GM10248 (cell line): ENCODE measurements at regions of chr13 and their contacts with region 1.

Region 1: DNA sequence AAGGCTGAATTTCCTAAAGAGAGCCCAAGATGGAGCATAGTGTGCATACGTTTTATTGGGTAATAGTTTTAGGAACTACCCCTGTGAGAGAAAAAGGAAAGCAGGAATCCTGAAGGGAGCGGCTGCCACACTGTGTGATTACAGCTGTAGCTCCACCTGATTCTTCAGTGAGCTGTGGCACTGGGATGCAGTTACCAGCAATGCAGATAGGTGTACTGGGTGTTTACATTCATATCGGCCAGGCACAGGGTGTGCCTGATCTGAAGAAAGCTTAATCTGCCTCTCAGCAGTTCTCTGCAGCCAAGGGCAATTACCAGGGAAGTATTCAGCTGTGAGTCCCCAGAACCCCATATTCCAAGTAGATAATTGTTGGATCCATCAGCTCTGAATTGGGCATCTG is 1541.8 kb downstream of the EFNB2 start:
- DNase-seq: no peak
- CTCF ChIP-seq: no peak

Region 2: GRCh38 chr13:104869501-104869900 is 124.2 kb before region 1 on chr13:
- CTCF ChIA-PET with region 1: no interaction called
- POLR2A ChIA-PET with region 1: no interaction called
- DNase-seq: no peak
- CTCF ChIP-seq: no peak

Region 3: DNA sequence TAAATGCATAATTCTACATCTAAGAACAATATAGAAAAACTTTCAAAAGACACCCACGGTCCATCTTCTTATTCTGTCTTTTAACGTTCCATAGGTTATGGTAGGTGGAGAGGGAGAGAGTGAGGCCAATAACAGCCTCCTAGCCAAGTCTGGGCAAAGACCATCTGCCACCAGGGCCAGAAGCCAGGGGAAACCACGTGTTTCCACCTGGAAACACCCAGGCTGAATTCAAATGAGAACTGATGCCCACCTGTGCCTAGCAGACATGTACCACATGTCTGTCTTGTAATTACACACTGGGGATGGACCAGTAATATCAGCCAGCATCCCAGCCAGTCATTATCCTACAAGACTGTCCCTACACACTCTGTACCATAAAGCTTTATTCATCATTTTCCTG is 31.3 kb before region 1 on chr13:
- CTCF ChIA-PET with region 1: no interaction called
- POLR2A ChIA-PET with region 1: no interaction called
- DNase-seq: no peak
- CTCF ChIP-seq: no peak

Region 4: DNA sequence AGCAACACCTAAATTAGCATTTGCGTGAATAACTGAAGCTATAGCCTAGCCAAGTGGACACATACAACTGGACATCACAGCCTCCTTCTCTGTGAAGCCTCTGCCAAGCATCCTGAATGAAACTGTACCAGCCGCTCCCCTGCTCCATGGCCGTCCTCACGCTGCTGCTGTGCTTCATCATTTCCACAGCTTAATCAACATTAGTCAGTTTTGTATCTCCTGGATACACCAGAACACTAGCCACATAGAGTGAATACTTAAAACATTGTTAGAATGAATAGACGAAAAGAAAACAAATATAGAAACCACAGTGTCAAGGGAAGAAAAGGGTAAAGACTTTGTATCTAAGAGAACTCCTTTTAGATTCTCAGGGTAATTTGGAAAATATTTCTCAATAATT is 14.9 kb after region 1 on chr13:
- CTCF ChIA-PET with region 1: interaction called, 10 read pairs
- POLR2A ChIA-PET with region 1: no interaction called
- DNase-seq: no peak
- CTCF ChIP-seq: no peak